Activated CD4-positive, alpha-beta memory T cell treated with anti-CD3 and anti-CD28 coated beads for 36 hours (primary cell): ENCODE measurements at regions of chr3 and their contacts with region 1.

Region 1: DNA sequence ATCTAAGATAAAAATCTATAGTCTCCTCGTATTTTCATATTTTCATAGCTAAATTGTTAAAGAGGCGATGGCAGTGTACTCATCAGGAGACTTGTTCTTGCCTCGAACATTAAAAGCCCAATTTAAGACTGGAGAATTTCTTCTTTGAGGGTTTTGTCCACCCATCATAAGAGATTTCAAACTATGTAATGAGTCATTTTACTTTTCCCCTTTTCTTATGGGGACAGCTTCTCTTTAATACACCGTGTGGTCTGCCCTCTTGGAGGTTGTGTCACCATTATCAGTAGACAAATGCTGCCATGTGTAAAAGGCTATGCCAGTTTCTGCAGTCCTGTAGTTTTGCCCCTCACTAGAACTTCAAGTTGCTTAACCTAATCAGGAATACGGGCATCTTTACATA is 16.9 kb downstream of the TGFBR2 start:
- DNase-seq: no peak
- H3K4me3 Mint-ChIP-seq: peak overlapping the region; percentile 59
- H3K27ac Mint-ChIP-seq: peak overlapping the region; percentile 96
- H3K4me1 Mint-ChIP-seq: peaks cover 91% of the 10 kb centered on the region
- H3K27me3 Mint-ChIP-seq: no peaks in the 10 kb centered on the region

Region 2: GRCh38 chr3:30518181-30518864 is 105.0 kb before region 1 on chr3:
- CTCF ChIA-PET with region 1: no interaction called
- POLR2A ChIA-PET with region 1: no interaction called
- intact Hi-C with region 1: no loop called
- DNase-seq: no peak
- H3K4me3 Mint-ChIP-seq: no peak overlapping the region
- H3K27ac Mint-ChIP-seq: no peak overlapping the region
- H3K4me1 Mint-ChIP-seq: peaks cover 2% of the 10 kb centered on the region
- H3K27me3 Mint-ChIP-seq: no peaks in the 10 kb centered on the region

Region 3: DNA sequence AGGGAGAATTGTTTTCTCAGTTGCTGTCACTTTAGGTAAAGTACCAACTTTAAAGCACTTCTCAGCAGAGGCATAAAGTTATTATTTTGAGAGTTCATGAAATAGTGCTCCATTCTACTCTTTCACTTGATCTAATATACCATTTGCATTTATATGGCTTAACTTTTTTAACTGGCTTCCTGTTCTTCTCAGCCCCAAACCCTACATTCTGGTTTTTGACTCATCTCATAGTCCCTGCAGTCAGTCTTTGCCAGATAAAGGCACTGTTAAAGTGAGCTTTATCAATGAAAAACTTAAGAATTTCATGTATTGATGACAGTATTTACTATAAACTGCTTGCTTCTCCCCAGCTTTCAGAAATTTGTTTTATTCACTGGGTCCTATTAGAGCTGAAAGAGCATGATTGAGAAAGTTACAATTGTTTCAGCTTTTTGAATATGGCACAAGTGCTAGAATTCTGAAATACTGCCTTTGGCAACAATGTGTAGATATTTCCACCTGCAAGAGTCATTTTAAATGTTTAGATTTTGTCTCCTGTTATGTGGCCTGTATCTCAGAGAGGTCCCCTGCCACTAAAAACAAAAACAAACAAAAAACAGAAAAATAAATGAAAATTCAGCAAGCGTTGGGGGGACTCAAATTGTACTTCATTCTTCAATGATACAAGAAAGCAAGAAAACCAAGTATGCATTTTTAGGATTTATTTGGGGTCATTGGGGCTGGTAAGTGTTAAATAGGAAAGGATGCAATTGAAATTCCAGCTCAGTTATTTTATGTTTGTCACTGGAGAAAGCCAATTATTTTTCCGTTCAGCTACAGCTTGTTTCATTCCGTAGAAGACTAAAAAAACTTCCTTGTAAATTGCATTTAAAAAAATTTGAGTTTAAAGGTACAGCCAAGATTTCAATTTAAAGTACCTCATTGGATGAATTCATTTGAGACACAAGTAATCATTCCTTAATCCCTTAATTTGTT is 11.7 kb after region 1 on chr3:
- CTCF ChIA-PET with region 1: interaction called, 4 read pairs
- POLR2A ChIA-PET with region 1: interaction called, 23 read pairs
- intact Hi-C with region 1: loop called (anchors 1 kb)
- DNase-seq: no peak
- H3K4me3 Mint-ChIP-seq: peak overlapping the region; percentile 45
- H3K27ac Mint-ChIP-seq: peak overlapping the region; percentile 91
- H3K4me1 Mint-ChIP-seq: peaks cover 89% of the 10 kb centered on the region
- H3K27me3 Mint-ChIP-seq: no peaks in the 10 kb centered on the region